ENCODE measurements at regions of chr1 and their contacts with region 1.

Region 1: DNA sequence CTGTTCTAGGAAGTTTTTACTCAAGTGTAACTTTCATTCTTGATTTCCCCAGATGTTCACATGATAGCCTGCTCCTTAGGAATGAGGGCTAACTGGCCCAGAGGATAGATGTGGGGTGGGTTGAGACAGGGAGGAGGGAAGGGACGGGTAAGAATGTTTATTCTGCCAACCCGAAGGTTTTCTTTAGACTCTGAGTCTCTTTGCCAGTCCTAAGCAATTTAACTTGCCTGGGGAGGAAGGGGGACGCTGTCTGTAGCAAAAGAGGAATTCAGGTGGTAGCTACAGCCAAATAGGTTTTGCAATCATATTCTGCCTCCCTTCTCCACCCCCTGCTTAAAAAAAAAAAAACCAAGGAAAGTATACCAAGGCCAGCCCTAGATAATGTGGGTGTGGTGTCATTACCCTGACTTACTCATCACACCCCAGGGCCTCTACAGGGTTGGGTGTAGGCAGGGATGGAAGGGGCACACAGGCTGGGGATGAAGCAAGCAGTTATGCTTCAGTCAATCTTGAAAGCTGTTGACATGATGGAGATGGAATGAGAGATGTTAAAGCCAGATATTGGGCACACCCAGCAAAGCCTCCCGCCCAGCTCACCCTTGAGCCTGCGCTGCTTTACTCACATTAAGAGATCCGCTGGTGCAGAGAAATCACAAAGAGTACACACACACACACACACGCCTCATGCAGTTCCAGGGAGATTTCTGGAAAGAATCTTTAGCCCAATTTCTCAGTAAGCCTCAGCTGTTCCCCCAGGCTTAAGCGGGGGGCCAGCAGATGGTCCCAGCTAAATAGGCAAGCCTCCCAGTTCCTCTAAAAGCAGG is 59.9 kb downstream of the PLXNA2 start:
- DNase-seq: peak in 1 of 2 donors; percentile 83
- H3K4me3 ChIP-seq: peak overlapping the region in 1 of 2 donors; percentile 6
- H3K27ac ChIP-seq: peak overlapping the region; percentile 55 to 67
- H3K4me1 ChIP-seq: peaks cover 0 to 28% of the 10 kb centered on the region in 2 donors
- H3K27me3 ChIP-seq: no peaks in the 10 kb centered on the region
- CTCF ChIP-seq: no peak

Region 2: DNA sequence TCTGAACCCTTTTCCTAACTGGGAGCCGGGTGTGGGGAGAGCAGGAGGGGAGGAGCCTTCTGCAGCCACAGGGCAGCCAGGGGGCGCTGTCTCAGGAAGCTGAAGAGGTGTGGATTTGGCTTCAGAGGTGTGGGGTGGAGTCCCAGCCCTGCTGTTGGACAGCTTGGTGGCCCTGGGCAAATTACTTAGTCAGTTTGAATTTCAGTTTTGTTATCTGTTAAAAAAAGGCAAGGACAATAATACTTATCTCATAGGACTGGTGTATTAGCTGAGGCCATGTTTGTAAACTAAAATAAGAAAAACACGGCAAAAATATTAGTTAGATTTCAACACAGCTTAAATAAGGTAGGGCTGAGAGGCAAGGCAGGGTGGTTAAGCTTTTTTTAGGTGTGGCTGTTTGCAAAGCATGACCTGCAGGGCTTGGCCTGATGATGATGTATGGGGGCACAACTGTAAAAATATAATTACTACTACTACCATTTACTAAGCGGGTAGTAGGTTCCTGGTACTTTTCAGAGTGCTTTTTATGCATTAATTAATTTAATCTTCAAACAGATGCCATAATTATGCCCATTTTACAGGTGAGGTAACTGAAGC is 51.9 kb before region 1 on chr1:
- intact Hi-C with region 1: loop called (anchors 5 kb)
- DNase-seq: peak in 1 of 2 donors; percentile 78
- H3K4me3 ChIP-seq: no peak overlapping the region
- H3K27ac ChIP-seq: no peak overlapping the region
- H3K4me1 ChIP-seq: peaks cover 2 to 17% of the 10 kb centered on the region in 2 donors
- H3K27me3 ChIP-seq: no peaks in the 10 kb centered on the region
- CTCF ChIP-seq: peak; percentile 65 to 75 (median 67)

Region 3: DNA sequence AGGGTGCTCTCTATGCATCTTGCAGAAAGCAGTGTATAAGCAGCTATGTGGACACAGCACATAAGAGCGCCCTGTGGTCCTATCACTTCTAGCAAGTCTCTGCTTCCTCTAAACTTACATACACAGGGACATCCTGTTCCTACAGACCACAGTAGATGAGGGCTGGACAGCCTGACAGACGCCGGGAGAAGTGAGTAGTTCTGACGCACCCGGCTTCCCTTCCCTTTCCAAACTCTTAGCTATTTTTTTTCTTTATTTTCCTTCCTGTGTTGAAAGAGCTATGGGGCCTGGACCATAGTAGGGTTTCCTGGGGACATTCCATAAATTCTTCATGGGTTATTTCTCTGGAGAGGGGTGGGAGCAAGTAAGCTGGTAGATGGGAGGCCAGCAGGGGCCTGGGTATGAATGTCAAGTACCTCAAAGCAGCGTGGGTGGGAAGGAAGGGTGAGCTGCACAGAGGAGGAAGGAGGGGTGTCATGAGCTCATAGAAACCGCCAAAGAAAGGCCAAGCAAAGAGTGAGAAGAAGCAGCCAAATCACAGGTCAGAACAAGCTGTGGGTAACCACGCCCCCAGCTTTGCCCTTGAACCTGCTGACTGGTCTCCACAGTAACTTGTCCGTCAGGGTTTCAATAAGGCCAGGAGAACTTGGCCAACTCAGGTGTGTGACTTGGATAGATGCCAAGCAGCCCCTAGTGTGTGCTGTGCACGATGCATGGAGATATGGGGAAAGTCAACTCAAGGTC is 23.3 kb after region 1 on chr1:
- intact Hi-C with region 1: loop called (anchors 1 kb)
- DNase-seq: peak; percentile 55 to 90
- H3K4me3 ChIP-seq: no peak overlapping the region
- H3K27ac ChIP-seq: peak overlapping the region; percentile 59 to 92
- H3K4me1 ChIP-seq: peaks cover 23 to 57% of the 10 kb centered on the region in 2 donors
- H3K27me3 ChIP-seq: no peaks in the 10 kb centered on the region
- CTCF ChIP-seq: no peak

Region 4: DNA sequence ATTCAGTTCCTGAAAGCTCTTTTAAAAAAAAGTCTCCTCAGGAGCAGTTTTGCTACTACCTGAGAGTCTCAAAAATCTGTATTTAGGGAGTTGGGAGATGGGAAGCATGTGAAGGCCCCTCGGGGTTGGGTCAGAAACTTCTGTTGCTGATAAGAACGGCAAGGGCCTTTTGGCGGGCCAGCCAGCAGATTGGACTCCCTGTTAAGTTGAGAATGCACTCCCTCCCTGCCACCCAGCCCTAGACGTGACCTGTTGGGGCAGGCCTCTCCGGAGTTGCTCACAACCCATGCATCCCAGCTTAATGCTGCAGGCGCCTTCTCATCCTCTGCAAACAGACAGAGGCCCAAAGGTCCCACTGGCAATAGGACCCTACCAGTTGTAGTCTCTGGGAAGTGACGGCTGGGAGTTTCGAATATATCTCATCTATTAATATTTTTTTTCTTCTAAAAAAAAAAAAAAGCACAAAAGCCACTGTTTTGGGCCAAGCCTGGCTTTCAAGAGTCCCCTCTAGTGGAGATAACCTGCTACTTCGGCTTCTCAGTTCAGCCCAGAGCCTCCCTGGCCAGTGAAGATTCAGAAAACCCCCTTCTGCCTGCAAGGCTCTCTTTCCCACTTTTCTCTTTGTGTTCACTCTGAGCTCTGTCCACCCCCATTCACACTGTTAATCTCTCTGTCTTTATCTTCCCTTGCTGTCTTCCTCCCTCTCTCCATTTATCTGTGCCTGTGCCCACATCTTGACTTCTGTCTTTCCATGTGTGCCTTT is 54.6 kb after region 1 on chr1:
- intact Hi-C with region 1: loop called (anchors 10 kb)
- DNase-seq: peak in 1 of 2 donors; percentile 67
- H3K4me3 ChIP-seq: peak overlapping the region in 1 of 2 donors; percentile 10
- H3K27ac ChIP-seq: peak overlapping the region; percentile 14 to 58
- H3K4me1 ChIP-seq: peaks cover 28 to 45% of the 10 kb centered on the region in 2 donors
- H3K27me3 ChIP-seq: no peaks in the 10 kb centered on the region
- CTCF ChIP-seq: peak; percentile 44 to 85 (median 80)

Region 5: DNA sequence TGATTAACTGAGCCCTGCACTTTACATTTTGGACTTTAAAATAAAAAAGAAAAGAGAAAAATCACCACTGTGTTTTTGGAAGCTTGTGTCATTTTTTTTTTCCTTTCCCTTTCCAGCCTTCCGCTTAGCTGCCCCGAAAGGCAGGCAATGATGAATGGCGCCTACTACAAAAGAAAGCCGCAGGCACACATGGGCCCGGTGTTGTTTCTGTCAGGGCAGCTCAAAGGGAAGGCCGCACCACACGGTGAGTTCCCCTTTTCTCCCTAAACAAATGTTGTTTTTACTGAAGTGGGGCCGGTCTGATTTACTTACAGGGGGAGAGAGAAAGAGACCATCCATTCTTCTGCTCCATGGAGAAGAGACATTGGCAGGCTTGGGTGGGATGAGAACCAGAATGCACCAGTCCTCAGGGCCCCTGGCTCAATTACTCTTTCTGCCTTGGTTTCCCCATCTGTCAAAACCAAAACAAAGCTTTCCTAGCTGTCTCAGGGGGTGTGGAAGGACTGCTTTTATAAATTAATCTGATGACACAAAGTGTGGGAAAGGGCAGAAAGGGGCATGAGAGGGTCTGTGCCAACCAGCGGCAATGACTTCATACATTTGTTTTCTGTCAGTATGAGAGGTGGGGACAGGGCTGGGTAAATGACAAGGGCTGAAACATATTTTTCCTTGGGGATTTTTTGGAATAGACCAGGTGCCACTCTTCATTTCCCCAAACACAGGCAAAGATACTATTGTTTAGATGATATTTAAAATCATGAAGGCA is 151.3 kb after region 1 on chr1:
- intact Hi-C with region 1: no loop called
- DNase-seq: no peak
- H3K4me3 ChIP-seq: no peak overlapping the region
- H3K27ac ChIP-seq: no peak overlapping the region
- H3K4me1 ChIP-seq: no peaks in the 10 kb centered on the region
- H3K27me3 ChIP-seq: no peaks in the 10 kb centered on the region
- CTCF ChIP-seq: no peak